ENCODE measurements at regions of chr7 and their contacts with region 1.

Region 1: DNA sequence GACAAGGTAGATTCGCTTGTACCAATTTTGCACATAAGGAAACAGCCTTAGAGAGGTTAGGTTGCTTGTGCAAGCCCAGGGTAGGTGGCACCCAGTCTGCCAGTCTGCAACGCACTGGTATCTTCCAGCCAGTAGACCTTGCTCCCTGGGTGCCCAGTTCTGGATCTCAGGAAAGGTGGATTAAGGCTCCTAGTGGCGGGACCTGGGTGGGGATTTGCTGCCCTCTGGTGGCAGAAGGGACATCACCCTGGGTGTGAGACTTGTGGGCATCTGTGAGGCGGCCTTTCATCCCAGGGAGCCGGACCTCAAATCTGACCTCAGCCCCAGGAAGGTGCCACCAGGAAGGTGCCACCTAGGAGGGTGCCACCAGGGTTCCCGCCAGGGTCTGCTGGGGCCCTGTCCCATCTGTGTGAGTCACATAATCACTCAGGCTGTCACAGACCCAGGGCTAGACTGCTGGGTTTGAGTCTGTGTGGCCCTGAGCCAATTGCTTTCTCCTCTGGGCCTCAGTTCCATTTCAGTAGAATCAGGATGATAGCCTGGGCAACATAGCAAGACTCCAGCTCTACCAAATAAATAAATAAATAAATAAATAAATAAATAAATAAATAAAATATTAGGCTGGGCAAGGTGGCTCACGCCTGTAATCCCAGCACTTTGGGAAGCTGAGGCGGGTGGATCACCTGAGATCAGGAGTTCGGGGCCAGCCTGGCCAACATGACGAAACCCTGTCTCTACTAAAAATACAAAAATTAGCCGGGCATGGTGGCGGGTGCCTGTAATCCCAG is 5.3 kb upstream of the PRKRIP1 start:
- DNase-seq: peak; percentile 88
- H3K4me3 ChIP-seq: no peak overlapping the region
- H3K27ac ChIP-seq: no peak overlapping the region
- H3K4me1 ChIP-seq: peaks cover 0 to 5% (median 0%) of the 10 kb centered on the region in 4 donors
- H3K27me3 ChIP-seq: no peaks in the 10 kb centered on the region
- CTCF ChIP-seq: peak; percentile 81 to 93 (median 91)
- EP300 ChIP-seq: no peak
- POLR2A ChIP-seq: no peak

Region 2: GRCh38 chr7:101542527-101543241 is 848.2 kb before region 1 on chr7:
- intact Hi-C with region 1: loop called (anchors 5 kb)
- DNase-seq: no peak
- H3K4me3 ChIP-seq: no peak overlapping the region
- H3K27ac ChIP-seq: no peak overlapping the region
- H3K4me1 ChIP-seq: no peaks in the 10 kb centered on the region
- H3K27me3 ChIP-seq: peaks cover 0 to 8% (median 0%) of the 10 kb centered on the region in 3 donors
- CTCF ChIP-seq: peak; percentile 50 to 92 (median 84)
- EP300 ChIP-seq: no peak
- POLR2A ChIP-seq: no peak

Region 3: GRCh38 chr7:102279537-102280400 is 111.1 kb before region 1 on chr7:
- intact Hi-C with region 1: loop called (anchors 1 kb)
- DNase-seq: no peak
- H3K4me3 ChIP-seq: no peak overlapping the region
- H3K27ac ChIP-seq: no peak overlapping the region
- H3K4me1 ChIP-seq: peaks cover 0 to 5% (median 1%) of the 10 kb centered on the region in 4 donors
- H3K27me3 ChIP-seq: no peaks in the 10 kb centered on the region
- CTCF ChIP-seq: peak; percentile 49 to 79 (median 66)
- EP300 ChIP-seq: no peak
- POLR2A ChIP-seq: no peak

Measured in sigmoid colon (tissue), 7 donors.